Right ventricle myocardium inferior (tissue), 1 donor: ENCODE measurements at regions of chrX and their contacts with region 1.

Region 1: GRCh38 chrX:45788941-45789348 is 588.3 kb upstream of the DIPK2B start:
- DNase-seq: peak; percentile 62
- ATAC-seq: no peak

Region 2: DNA sequence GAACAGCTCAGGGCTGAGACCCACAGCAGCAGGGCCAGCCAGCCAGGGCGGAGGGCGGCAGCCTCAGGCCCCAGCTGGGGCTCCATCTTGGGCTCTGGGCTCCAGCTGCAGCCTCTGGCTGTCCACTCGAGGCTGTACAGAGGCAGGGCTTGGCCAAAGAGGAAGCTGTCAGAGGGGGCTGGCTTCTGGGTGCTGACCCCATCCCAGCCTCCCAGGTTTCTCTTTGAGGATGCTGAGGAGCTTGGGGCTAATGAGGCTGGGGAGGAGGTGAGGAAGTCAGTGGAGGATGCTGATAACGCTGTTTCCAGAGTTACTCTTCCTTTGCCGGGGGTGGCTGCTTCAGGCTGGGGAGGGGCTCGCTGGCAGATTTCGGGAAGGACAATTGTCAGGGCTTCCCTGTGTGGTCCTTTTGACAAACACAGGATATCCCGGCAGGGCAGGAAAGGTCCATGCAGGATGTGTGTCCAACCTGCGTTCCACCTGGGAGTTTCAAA is 588.2 kb before region 1 on chrX and contains the start of gene DIPK2B:
- intact Hi-C with region 1: loop called (anchors 5 kb)
- DNase-seq: no peak
- ATAC-seq: no peak
- total RNA-seq, gene DIPK2B: 21.4 TPM

Region 3: GRCh38 chrX:45485686-45486085 is 303.3 kb before region 1 on chrX:
- intact Hi-C with region 1: no loop called
- DNase-seq: no peak
- ATAC-seq: no peak